Activated CD4-positive, alpha-beta T cell treated with anti-CD3 and anti-CD28 coated beads for 36 hours (primary cell): ENCODE measurements at regions of chr9 and their contacts with region 1.

Region 1: DNA sequence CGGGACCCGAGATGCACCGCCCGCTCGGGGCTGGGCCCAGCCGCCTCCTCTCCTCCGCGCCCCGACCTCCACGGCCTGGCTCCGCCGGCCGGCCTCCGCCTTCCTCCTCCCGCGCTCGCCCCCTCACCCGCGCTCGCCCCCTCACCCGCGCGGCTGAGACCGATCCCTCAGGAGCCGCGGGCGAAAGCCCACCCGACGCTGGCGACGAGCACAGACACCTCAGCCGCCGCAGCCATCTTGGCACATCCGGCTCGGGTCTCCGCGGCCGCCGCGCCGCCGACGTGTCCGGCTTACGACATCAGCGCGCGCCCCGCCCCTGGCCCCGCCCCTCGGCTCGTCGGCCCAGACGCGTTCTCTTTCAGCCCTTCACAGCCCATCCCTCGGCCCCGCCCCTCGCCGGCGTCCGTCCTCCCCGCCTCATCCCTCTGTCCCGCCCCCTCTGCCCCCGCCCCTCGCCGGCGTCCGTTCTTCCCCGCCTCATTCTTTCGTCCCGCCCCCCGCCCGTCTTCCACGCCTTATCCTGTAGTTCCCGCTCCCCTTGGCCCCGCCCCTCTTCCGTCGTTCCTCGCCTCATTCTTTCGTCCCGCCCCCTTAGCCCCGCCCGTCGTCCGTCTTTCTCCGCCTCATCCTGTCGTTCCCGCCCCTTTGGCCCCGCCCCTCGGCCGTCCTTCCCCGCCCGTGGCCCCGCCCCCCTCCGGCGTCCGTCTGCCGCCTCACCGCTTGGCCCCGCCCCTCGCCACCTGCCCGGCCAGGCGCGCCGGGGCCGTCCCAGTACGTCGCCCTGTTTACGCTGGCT is at the start of gene SEC16A:
- DNase-seq: peak; percentile 100
- ATAC-seq: peak; percentile 76
- H3K4me3 Mint-ChIP-seq: peak within 1 kb of the TSS; percentile 97
- H3K27ac Mint-ChIP-seq: peak within 1 kb of the TSS; percentile 98
- H3K4me1 Mint-ChIP-seq: peaks cover 35% of the 10 kb centered on the region
- H3K27me3 Mint-ChIP-seq: no peaks in the 10 kb centered on the region
- total RNA-seq, gene SEC16A: 62.7 TPM

Region 2: DNA sequence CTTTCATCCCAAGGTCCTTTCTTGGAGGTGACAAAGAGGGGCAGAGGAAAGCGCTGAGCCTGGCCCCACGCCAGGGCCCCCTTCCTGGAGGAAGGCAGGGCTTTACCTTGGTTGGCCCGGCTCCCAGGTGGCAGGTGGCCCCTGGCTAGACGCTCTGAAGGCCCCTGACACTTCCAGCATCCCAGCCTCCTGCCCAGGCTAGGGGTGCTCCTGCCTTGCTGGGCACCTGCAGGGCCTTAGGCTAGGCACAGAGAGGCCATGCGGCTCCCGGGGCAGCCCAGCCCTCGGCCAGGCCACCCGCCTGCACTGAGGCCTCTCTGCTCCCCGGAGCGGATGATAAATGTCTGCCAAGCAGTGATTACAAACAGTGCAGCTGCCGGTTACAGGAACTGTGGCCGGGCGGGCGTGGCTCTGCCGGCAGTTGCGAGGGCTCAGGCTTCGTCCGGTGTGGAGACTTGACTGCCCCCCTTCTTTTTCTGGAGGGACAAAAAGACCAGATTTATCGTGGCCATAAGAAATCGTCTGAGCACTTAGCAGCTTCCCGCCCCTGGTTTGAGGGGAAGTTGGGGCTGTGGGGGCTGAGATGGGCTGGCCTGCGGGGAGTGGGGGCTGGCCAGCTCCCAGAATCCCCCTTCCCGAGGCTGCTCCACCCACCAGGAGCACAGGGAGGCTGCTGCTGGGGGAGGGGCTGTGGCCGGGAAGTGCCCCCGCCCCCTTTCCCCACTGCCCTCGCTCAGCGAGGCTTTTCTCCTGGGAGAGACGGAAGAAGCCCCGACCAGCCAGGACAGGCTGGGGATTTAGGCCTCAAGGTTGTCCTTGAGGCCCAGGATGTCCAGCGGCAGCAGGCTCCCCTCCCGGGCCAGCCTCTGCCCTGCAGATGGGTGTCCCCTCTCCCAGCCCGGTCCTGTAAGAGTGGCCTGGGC is 490.2 kb before region 1 on chr9:
- CTCF ChIA-PET with region 1: no interaction called
- POLR2A ChIA-PET with region 1: no interaction called
- intact Hi-C with region 1: loop called in 1 of 2 experiments (anchors 2 kb)
- DNase-seq: peak; percentile 68
- ATAC-seq: peak; percentile 71
- H3K4me3 Mint-ChIP-seq: no peak overlapping the region
- H3K27ac Mint-ChIP-seq: no peak overlapping the region
- H3K4me1 Mint-ChIP-seq: peaks cover 17% of the 10 kb centered on the region
- H3K27me3 Mint-ChIP-seq: no peaks in the 10 kb centered on the region

Region 3: GRCh38 chr9:136400038-136400834 is 82.8 kb before region 1 on chr9 and contains the start of gene SNAPC4:
- CTCF ChIA-PET with region 1: no interaction called
- POLR2A ChIA-PET with region 1: no interaction called
- intact Hi-C with region 1: loop called in 1 of 2 experiments (anchors 1 kb)
- DNase-seq: peak; percentile 93
- ATAC-seq: peak; percentile 68
- H3K4me3 Mint-ChIP-seq: peak within 1 kb of the TSS; percentile 86
- H3K27ac Mint-ChIP-seq: peak within 1 kb of the TSS; percentile 80
- H3K4me1 Mint-ChIP-seq: peaks cover 50% of the 10 kb centered on the region
- H3K27me3 Mint-ChIP-seq: no peaks in the 10 kb centered on the region
- total RNA-seq, gene SNAPC4: 12.4 to 16.8 TPM

Region 4: DNA sequence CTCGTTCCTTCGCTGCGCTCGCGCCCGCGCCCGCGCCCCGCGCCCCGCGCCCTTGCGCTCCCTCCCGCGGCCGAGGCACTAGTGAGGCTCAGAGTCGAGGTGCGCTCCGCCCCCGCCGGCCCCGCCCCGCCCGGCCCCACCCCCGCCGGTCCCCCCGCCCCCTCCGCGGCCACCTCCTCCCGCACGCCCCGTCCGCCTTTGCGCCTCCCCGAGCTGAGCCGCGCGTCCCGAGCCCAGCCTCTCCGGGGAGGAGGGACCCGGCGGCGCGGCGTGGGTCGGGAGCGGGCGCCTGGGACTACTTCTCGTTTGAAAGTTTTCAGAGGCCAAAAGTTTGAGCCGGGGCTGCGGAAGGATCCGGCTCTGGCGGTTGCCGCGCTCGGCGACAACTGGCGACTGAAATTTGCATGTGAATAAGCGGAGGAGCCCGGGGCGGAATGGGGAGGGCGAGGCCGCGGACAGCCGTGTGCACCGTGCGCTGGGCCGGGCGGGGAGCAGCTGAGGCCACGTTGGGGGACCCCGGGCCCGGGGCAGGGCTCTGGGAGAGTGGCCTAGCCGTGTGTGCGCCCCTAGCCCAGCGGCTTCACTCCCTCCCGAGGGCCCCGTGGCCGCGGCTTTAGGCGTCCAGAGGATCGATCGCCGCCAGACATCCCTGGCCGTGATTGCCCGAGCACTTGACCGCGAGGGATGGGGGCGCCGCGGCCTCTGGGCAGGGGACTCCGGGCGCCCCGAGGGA is 63.1 kb after region 1 on chr9 and contains the start of gene NOTCH1:
- CTCF ChIA-PET with region 1: interaction called, 14 read pairs
- POLR2A ChIA-PET with region 1: no interaction called
- intact Hi-C with region 1: loop called (anchors 1 kb)
- DNase-seq: peak; percentile 95
- ATAC-seq: peak; percentile 75
- H3K4me3 Mint-ChIP-seq: peak within 1 kb of the TSS; percentile 92
- H3K27ac Mint-ChIP-seq: peak within 1 kb of the TSS; percentile 88
- H3K4me1 Mint-ChIP-seq: peaks cover 34% of the 10 kb centered on the region
- H3K27me3 Mint-ChIP-seq: no peaks in the 10 kb centered on the region
- total RNA-seq, gene NOTCH1: 70.0 to 79.4 TPM

Region 5: DNA sequence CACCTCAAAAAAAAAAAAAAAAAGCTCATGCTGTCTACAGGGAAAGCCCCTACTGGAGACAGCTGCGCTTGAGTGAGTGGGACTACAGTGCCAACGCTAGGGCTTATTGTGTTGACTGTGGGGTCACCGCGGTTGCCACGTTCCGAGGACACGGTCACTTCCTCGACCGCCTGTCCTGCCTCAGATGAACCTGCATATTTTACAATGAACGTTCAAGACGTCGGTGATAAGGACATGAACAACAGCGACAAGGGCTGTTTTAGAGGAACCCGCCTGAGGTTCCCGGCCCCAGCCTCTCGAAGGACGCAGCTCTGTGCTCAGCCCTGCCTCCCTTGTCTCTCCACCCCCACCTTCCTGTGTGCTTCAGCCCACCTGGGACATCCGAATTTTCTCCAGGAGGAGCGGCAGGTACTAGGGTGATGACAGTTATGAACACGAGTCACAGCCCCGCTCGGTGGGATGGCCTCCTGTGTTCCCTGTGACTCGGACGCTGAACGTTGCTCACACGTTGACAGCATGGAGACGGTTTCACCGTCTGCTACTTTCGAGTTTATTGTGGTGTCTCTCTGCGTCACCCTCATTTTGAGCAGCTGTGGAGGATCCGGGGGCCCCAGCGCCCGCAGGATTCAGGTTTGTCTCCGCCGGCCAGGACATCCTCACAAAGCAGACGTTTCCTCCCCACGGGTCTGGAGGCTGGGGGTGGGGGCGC is 218.1 kb after region 1 on chr9:
- CTCF ChIA-PET with region 1: interaction called, 3 read pairs
- POLR2A ChIA-PET with region 1: no interaction called
- intact Hi-C with region 1: loop called in 1 of 2 experiments (anchors 1 kb)
- DNase-seq: peak; percentile 92
- ATAC-seq: peak; percentile 97
- H3K4me3 Mint-ChIP-seq: peak overlapping the region; percentile 62
- H3K27ac Mint-ChIP-seq: peak overlapping the region; percentile 91
- H3K4me1 Mint-ChIP-seq: peaks cover 20% of the 10 kb centered on the region
- H3K27me3 Mint-ChIP-seq: peaks cover 20% of the 10 kb centered on the region

Region 6: DNA sequence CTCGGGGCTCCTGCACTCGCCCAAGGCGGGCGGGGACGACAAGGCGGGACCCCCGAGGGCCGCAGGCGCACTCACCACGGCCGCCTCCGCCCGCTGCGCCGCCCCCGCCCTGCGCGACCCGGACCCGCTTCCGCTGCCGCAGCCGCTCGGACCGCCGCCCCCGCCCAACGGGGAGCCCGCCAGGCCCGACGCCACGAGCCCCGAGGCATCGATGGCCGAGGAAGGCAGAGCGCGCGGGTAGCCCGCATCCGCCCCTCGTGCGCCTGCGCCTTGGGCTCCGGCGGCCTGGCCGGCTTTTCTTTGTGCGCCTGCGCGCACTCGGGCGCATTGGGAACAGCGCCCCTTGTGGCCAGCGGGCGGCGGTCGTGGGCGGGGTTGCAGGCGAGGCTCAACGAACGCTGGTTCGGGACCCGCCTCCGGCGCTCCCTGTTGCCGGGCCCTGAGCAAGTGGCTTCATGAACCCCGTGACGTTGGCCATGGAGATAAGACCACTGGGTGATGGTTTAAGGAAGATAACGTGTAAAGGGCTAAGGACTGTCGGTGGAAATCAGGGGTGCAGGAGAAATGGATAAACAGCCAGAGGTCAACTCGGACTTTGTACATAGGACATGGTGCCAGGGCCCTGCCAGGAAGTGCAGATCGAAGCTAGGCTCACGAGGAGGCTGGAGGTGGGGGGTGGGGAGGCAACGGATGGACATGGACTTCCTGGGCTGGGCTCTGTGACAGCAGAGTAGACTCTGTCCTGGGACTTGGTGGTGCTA is 461.7 kb after region 1 on chr9 and contains the starts of genes C8G and FBXW5:
- CTCF ChIA-PET with region 1: interaction called, 3 read pairs
- POLR2A ChIA-PET with region 1: interaction called, 3 read pairs
- intact Hi-C with region 1: loop called in 1 of 2 experiments (anchors 1 kb)
- DNase-seq: peak; percentile 97
- ATAC-seq: peak; percentile 84
- H3K4me3 Mint-ChIP-seq: peak within 1 kb of the TSS; percentile 77
- H3K27ac Mint-ChIP-seq: peak within 1 kb of the TSS; percentile 88
- H3K4me1 Mint-ChIP-seq: peaks cover 9% of the 10 kb centered on the region
- H3K27me3 Mint-ChIP-seq: no peaks in the 10 kb centered on the region
- total RNA-seq, gene C8G: 0.77 TPM in 1 of 2 experiments, not detected in the other
- total RNA-seq, gene FBXW5: 54.4 to 66.4 TPM

Region 7: GRCh38 chr9:137240861-137241489 is 758.0 kb after region 1 on chr9 and contains the start of gene TUBB4B:
- CTCF ChIA-PET with region 1: no interaction called
- POLR2A ChIA-PET with region 1: no interaction called
- intact Hi-C with region 1: loop called in 1 of 2 experiments (anchors 1 kb)
- DNase-seq: peak; percentile 98
- ATAC-seq: peak; percentile 84
- H3K4me3 Mint-ChIP-seq: peak within 1 kb of the TSS; percentile 83
- H3K27ac Mint-ChIP-seq: peak within 1 kb of the TSS; percentile 87
- H3K4me1 Mint-ChIP-seq: peaks cover 27% of the 10 kb centered on the region
- H3K27me3 Mint-ChIP-seq: no peaks in the 10 kb centered on the region
- total RNA-seq, gene TUBB4B: 264 to 278 TPM